ENCODE measurements at regions of chr15 and their contacts with region 1.

Region 1: GRCh38 chr15:42137431-42138261 is 18.8 kb downstream of the PLA2G4F start:
- DNase-seq: no peak
- ATAC-seq: peak in 3 of 4 donors; percentile 68 to 73 (median 69)
- H3K4me3 ChIP-seq: no peak overlapping the region
- H3K27ac ChIP-seq: no peak overlapping the region
- H3K4me1 ChIP-seq: no peaks in the 10 kb centered on the region
- H3K27me3 ChIP-seq: no peaks in the 10 kb centered on the region
- CTCF ChIP-seq: peak in 3 of 4 donors; percentile 24 to 42 (median 27)

Region 2: GRCh38 chr15:40637221-40637745 is 1500.4 kb before region 1 on chr15:
- intact Hi-C with region 1: loop called in 1 of 3 experiments (anchors 5 kb)
- DNase-seq: no peak
- ATAC-seq: no peak
- H3K4me3 ChIP-seq: no peak overlapping the region
- H3K27ac ChIP-seq: no peak overlapping the region
- H3K4me1 ChIP-seq: no peaks in the 10 kb centered on the region
- H3K27me3 ChIP-seq: no peaks in the 10 kb centered on the region
- CTCF ChIP-seq: no peak

Region 3: GRCh38 chr15:41989259-41989933 is 148.2 kb before region 1 on chr15:
- intact Hi-C with region 1: loop called in 2 of 3 experiments (anchors 10 kb)
- DNase-seq: peak; percentile 76 to 98 (median 92)
- ATAC-seq: peak; percentile 96 to 99 (median 98)
- H3K4me3 ChIP-seq: no peak overlapping the region
- H3K27ac ChIP-seq: no peak overlapping the region
- H3K4me1 ChIP-seq: no peaks in the 10 kb centered on the region
- H3K27me3 ChIP-seq: no peaks in the 10 kb centered on the region
- CTCF ChIP-seq: peak; percentile 94 to 99 (median 98)

Region 4: GRCh38 chr15:42065033-42065432 is 72.6 kb before region 1 on chr15:
- intact Hi-C with region 1: loop called in 2 of 3 experiments (anchors 5 kb)
- DNase-seq: peak in 2 of 6 donors; percentile 8 to 12
- ATAC-seq: no peak
- H3K4me3 ChIP-seq: no peak overlapping the region
- H3K27ac ChIP-seq: no peak overlapping the region
- H3K4me1 ChIP-seq: peaks cover 4 to 16% (median 12%) of the 10 kb centered on the region in 3 donors
- H3K27me3 ChIP-seq: no peaks in the 10 kb centered on the region
- CTCF ChIP-seq: no peak

Region 5: DNA sequence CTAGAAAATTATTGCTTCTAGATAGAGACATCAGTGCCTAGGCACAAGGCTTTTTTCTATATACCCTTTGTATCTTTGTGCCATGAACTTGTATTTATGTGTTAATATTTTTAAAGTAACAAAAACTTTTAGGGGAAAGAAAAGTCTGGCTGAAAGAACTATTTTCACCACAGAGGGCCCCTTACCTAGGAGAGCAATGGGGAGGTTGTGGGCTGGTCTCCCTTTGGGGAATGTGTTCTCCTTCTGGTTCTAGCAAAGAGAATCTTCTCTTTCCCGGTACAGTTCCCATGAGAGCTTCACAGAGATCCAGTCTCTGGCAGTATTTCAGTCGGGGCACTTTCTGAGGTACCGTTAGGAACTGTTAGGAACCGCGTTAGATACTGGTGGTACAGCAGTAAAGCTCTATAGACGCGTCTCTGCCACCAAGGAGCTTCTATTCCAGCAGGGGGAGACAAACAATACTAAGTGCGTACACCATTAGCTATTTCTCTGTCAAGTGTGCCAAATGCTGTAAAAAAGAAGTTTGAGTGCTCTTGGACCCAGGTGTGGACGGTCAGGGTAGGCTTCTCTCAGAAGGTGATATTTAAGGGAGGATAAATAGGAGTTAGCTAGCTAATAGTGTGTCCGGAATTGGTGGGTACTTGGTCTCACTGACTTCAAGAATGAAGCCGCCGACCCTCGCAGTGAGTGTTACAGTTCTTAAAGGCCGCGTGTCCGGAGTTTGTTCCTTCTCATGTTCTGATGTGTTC is 1087.7 kb after region 1 on chr15:
- intact Hi-C with region 1: no loop called
- DNase-seq: peak in 2 of 6 donors; percentile 18 to 45
- ATAC-seq: peak; percentile 71 to 93 (median 92)
- H3K4me3 ChIP-seq: no peak overlapping the region
- H3K27ac ChIP-seq: no peak overlapping the region
- H3K4me1 ChIP-seq: no peaks in the 10 kb centered on the region
- H3K27me3 ChIP-seq: no peaks in the 10 kb centered on the region
- CTCF ChIP-seq: peak; percentile 51 to 61 (median 58)

Measured in pancreas (tissue), 10 donors.